Natural killer cell (primary cell): ENCODE measurements at regions of chr4 and their contacts with region 1.

Region 1: DNA sequence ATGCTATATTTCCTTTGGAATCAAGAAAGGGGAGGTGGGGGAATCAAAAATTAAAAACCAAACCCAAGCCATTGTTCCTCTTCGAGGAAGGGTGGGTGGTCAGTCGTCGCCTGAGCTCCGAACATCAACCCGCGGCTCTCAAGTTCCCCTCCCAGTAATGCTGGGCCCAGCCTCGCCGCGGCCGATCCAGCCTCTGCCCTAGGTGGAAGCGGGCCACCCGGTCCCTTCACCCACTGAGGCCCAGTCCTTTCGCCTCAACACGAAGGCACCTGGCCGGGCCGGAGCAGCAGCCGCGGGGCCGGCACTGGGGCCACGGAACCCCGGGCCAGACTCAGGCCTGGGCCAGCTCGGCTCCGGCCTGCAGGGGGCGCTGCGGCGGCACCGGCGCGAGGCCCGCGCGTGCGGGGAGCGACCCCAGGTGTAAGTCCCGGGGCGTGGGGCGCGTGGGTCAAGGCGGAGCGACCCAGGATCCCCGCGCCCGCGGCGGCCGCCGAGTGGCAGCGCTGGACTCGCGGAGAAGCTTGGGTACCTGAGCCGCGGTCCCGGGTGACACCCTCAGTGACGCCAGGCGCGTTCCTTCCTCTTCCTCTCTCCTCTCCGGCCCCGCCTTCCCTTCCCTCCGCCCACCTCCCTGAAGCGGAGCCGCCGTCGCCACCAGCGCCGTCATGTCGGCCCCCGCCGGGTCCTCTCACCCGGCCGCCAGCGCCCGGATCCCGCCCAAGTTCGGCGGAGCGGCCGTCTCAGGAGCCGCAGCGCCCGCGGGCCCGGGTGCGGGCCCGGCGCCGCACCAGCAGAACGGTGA is at the start of gene SEC24B:
- DNase-seq: peak; percentile 87 to 95
- ATAC-seq: peak; percentile 85 to 94 (median 88)
- H3K4me3 ChIP-seq: peak within 1 kb of the TSS; percentile 87
- H3K4me3 Mint-ChIP-seq: peak within 1 kb of the TSS; percentile 84
- H3K27ac ChIP-seq: peak within 1 kb of the TSS; percentile 97
- H3K27ac Mint-ChIP-seq: peak within 1 kb of the TSS; percentile 87
- H3K4me1 ChIP-seq: peaks cover 33% of the 10 kb centered on the region
- H3K4me1 Mint-ChIP-seq: peaks cover 39 to 53% of the 10 kb centered on the region in 2 donors
- H3K27me3 ChIP-seq: no peaks in the 10 kb centered on the region
- H3K27me3 Mint-ChIP-seq: no peaks in the 10 kb centered on the region
- CTCF ChIP-seq: peak; percentile 95
- total RNA-seq, gene SEC24B: 38.6 to 43.9 (median 40.7) TPM

Region 2: DNA sequence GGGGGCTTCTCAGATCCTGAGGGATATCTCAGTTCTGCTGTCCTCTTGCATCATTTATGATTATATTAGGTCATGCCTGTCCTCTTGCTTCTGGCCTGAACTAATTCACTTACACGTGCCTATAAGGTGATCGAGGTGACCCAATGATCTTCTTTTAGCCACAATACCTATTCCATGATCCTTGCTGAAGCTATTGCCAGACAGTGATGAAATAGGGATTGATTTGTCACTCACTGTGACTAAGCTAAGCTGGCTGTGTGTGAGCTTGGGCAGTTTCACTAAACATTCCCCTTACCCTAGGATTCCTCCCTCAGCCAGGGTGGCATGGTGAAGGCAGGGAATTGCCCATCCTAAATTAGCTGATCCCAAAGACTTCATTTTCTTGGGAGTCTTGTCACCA is 1424.7 kb before region 1 on chr4:
- intact Hi-C with region 1: no loop called
- DNase-seq: no peak
- ATAC-seq: no peak
- H3K4me3 ChIP-seq: no peak overlapping the region
- H3K4me3 Mint-ChIP-seq: no peak overlapping the region
- H3K27ac ChIP-seq: no peak overlapping the region
- H3K27ac Mint-ChIP-seq: no peak overlapping the region
- H3K4me1 ChIP-seq: peaks cover 3% of the 10 kb centered on the region
- H3K4me1 Mint-ChIP-seq: peaks cover 10 to 24% of the 10 kb centered on the region in 2 donors
- H3K27me3 ChIP-seq: no peaks in the 10 kb centered on the region
- H3K27me3 Mint-ChIP-seq: no peaks in the 10 kb centered on the region
- CTCF ChIP-seq: no peak

Region 3: GRCh38 chr4:109389369-109390114 is 43.9 kb before region 1 on chr4:
- intact Hi-C with region 1: no loop called
- DNase-seq: no peak
- ATAC-seq: no peak
- H3K4me3 ChIP-seq: no peak overlapping the region
- H3K4me3 Mint-ChIP-seq: no peak overlapping the region
- H3K27ac ChIP-seq: no peak overlapping the region
- H3K27ac Mint-ChIP-seq: no peak overlapping the region
- H3K4me1 ChIP-seq: no peaks in the 10 kb centered on the region
- H3K4me1 Mint-ChIP-seq: no peaks in the 10 kb centered on the region
- H3K27me3 ChIP-seq: no peaks in the 10 kb centered on the region
- H3K27me3 Mint-ChIP-seq: peaks cover 21 to 46% of the 10 kb centered on the region in 2 donors
- CTCF ChIP-seq: no peak

Region 4: GRCh38 chr4:109444182-109444844 is 10.9 kb after region 1 on chr4:
- intact Hi-C with region 1: no loop called
- DNase-seq: no peak
- ATAC-seq: no peak
- H3K4me3 ChIP-seq: no peak overlapping the region
- H3K4me3 Mint-ChIP-seq: no peak overlapping the region
- H3K27ac ChIP-seq: no peak overlapping the region
- H3K27ac Mint-ChIP-seq: peak overlapping the region; percentile 0 to 16
- H3K4me1 ChIP-seq: no peaks in the 10 kb centered on the region
- H3K4me1 Mint-ChIP-seq: peaks cover 69 to 70% of the 10 kb centered on the region in 2 donors
- H3K27me3 ChIP-seq: no peaks in the 10 kb centered on the region
- H3K27me3 Mint-ChIP-seq: no peaks in the 10 kb centered on the region
- CTCF ChIP-seq: no peak

Region 5: DNA sequence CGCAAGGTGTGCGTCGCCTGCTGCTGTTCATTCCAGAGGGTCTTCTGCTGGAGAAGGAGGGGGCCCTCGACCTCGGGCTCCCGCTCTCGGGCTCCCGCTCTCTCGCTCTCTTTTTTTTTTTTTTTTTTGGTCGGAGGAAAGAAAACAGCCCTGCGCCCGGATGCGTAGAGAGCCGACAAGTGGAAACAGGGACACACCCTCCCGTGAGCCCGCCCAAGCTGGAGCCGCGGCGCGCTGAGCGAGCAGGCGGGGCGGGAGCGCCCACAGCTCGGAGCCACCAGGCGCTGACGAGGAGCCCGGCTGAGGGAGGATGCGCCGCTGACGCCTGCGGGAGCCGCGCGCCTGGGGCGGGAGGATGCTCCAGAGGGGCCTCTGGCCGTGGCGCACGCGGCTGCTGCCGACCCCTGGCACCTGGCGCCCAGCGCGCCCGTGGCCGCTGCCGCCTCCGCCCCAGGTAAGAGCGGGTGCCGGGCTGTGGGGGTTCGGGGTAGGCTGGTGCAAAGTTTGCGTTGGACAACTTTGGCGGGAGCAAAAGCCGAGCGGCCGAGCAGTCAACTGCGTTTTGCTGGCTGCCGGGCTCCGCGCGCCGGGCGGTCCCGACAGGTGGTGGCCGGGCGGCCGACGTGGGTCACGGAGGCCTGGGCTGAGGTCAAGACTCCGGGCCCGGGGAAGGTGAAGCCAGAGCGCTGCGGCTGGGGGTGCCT is 126.7 kb after region 1 on chr4 and contains the start of gene MCUB:
- intact Hi-C with region 1: loop called (anchors 5 kb)
- DNase-seq: peak; percentile 68 to 96
- ATAC-seq: peak; percentile 78 to 87 (median 82)
- H3K4me3 ChIP-seq: peak within 1 kb of the TSS; percentile 78
- H3K4me3 Mint-ChIP-seq: peak within 1 kb of the TSS; percentile 82
- H3K27ac ChIP-seq: peak within 1 kb of the TSS; percentile 82
- H3K27ac Mint-ChIP-seq: peak within 1 kb of the TSS; percentile 68 to 88
- H3K4me1 ChIP-seq: peaks cover 13% of the 10 kb centered on the region
- H3K4me1 Mint-ChIP-seq: peaks cover 16 to 39% of the 10 kb centered on the region in 2 donors
- H3K27me3 ChIP-seq: no peaks in the 10 kb centered on the region
- H3K27me3 Mint-ChIP-seq: no peaks in the 10 kb centered on the region
- CTCF ChIP-seq: no peak
- total RNA-seq, gene MCUB: 25.1 to 35.8 (median 31.1) TPM

Region 6: DNA sequence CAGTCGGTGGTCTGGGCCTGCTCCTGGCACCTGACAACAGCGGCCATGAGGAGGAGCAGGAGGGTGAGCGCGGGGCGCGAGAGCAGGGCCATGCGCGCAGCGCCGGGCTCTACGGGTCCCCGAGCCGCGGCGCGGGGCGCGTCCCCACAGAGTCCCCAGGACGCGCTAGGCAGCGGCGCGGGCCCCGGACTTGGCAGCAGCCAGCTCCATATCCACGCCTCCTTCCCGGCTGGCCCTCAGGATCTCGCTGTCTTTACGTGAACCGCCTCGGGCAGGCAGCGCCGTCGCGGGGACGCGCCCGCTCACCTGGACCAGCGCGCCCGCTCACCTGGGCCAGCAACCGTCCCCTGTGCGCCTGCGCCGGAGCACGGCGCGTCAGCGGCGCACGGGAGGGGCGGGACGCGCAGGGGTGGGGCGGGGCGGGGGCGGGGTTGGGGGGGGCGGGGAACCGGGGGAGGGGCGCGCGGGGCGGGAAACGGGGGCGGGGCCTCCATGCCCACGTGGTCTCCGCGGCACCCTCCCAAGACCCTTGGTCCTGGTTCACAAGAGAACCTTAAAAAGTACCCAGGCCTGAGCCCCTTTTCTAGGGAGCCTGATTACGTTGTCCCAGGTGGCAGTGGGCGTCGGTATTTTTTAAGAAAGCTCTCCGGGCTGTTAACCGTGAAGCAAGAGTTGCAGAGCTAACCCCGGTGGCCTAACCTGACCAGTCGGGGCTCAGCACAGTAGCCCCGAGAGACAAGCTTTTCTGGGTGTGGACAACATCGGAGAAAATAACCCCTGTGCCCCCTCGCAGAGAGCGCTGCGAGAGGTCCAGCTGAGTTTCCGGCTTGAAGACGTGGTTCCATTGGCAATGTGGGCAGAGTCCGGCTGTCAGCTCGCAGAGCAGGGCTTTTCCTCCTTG is 296.6 kb after region 1 on chr4 and contains the start of gene PLA2G12A:
- intact Hi-C with region 1: loop called (anchors 2 kb)
- DNase-seq: peak; percentile 64 to 93
- ATAC-seq: peak; percentile 86 to 94 (median 89)
- H3K4me3 ChIP-seq: peak within 1 kb of the TSS; percentile 58
- H3K4me3 Mint-ChIP-seq: peak within 1 kb of the TSS; percentile 88
- H3K27ac ChIP-seq: peak within 1 kb of the TSS; percentile 46
- H3K27ac Mint-ChIP-seq: peak within 1 kb of the TSS; percentile 50 to 71
- H3K4me1 ChIP-seq: peaks cover 9% of the 10 kb centered on the region
- H3K4me1 Mint-ChIP-seq: peaks cover 17 to 24% of the 10 kb centered on the region in 2 donors
- H3K27me3 ChIP-seq: no peaks in the 10 kb centered on the region
- H3K27me3 Mint-ChIP-seq: peaks cover 0 to 2% of the 10 kb centered on the region in 2 donors
- CTCF ChIP-seq: no peak
- total RNA-seq, gene PLA2G12A: 7.2 to 11.5 (median 10.1) TPM

Region 7: GRCh38 chr4:109815151-109816081 is 382.0 kb after region 1 on chr4 and contains the start of gene GAR1:
- intact Hi-C with region 1: loop called (anchors 5 kb)
- DNase-seq: peak; percentile 70 to 95
- ATAC-seq: peak; percentile 83 to 91 (median 84)
- H3K4me3 ChIP-seq: peak within 1 kb of the TSS; percentile 82
- H3K4me3 Mint-ChIP-seq: peak within 1 kb of the TSS; percentile 93
- H3K27ac ChIP-seq: peak within 1 kb of the TSS; percentile 78
- H3K27ac Mint-ChIP-seq: peak within 1 kb of the TSS; percentile 90 to 94
- H3K4me1 ChIP-seq: peaks cover 19% of the 10 kb centered on the region
- H3K4me1 Mint-ChIP-seq: peaks cover 36 to 40% of the 10 kb centered on the region in 2 donors
- H3K27me3 ChIP-seq: no peaks in the 10 kb centered on the region
- H3K27me3 Mint-ChIP-seq: peaks cover 9 to 10% of the 10 kb centered on the region in 2 donors
- CTCF ChIP-seq: no peak
- total RNA-seq, gene GAR1: 9.5 to 11.2 (median 9.7) TPM

Region 8: GRCh38 chr4:110193822-110194761 is 760.7 kb after region 1 on chr4:
- intact Hi-C with region 1: loop called (anchors 10 kb)
- DNase-seq: peak; percentile 62 to 89
- ATAC-seq: peak; percentile 72 to 83 (median 75)
- H3K4me3 ChIP-seq: no peak overlapping the region
- H3K4me3 Mint-ChIP-seq: peak overlapping the region; percentile 57
- H3K27ac ChIP-seq: peak overlapping the region; percentile 72
- H3K27ac Mint-ChIP-seq: peak overlapping the region; percentile 80 to 91
- H3K4me1 ChIP-seq: peaks cover 19% of the 10 kb centered on the region
- H3K4me1 Mint-ChIP-seq: peaks cover 36 to 47% of the 10 kb centered on the region in 2 donors
- H3K27me3 ChIP-seq: no peaks in the 10 kb centered on the region
- H3K27me3 Mint-ChIP-seq: no peaks in the 10 kb centered on the region
- CTCF ChIP-seq: no peak